B cell (primary cell): ENCODE measurements at regions of chr16 and their contacts with region 1.

Region 1: GRCh38 chr16:48609652-48610029 is 339 bp downstream of the N4BP1 start:
- DNase-seq: no peak
- ATAC-seq: peak; percentile 68
- H3K4me3 ChIP-seq: peak overlapping the region; percentile 76 to 96 (median 77)
- H3K4me3 Mint-ChIP-seq: peak overlapping the region; percentile 92
- H3K27ac ChIP-seq: peak overlapping the region in 1 of 2 donors; percentile 58
- H3K27ac Mint-ChIP-seq: peak overlapping the region; percentile 86
- H3K4me1 ChIP-seq: peaks cover 51 to 53% of the 10 kb centered on the region in 2 donors
- H3K4me1 Mint-ChIP-seq: peaks cover 38% of the 10 kb centered on the region
- H3K27me3 ChIP-seq: no peaks in the 10 kb centered on the region
- H3K27me3 Mint-ChIP-seq: no peaks in the 10 kb centered on the region
- CTCF ChIP-seq: no peak

Region 2: GRCh38 chr16:48244080-48244862 is 365.4 kb before region 1 on chr16 and contains the start of gene LONP2:
- CTCF ChIA-PET with region 1: no interaction called
- POLR2A ChIA-PET with region 1: no interaction called
- intact Hi-C with region 1: loop called (anchors 1 kb)
- DNase-seq: peak; percentile 91
- ATAC-seq: peak; percentile 96
- H3K4me3 ChIP-seq: peak within 1 kb of the TSS; percentile 60 to 87 (median 78)
- H3K4me3 Mint-ChIP-seq: peak within 1 kb of the TSS; percentile 91
- H3K27ac ChIP-seq: peak within 1 kb of the TSS; percentile 78 to 90
- H3K27ac Mint-ChIP-seq: peak within 1 kb of the TSS; percentile 79
- H3K4me1 ChIP-seq: peaks cover 16 to 22% of the 10 kb centered on the region in 2 donors
- H3K4me1 Mint-ChIP-seq: peaks cover 27% of the 10 kb centered on the region
- H3K27me3 ChIP-seq: no peaks in the 10 kb centered on the region
- H3K27me3 Mint-ChIP-seq: no peaks in the 10 kb centered on the region
- CTCF ChIP-seq: no peak
- total RNA-seq, gene LONP2: 84.2 and 87.2 TPM in 2 replicates

Region 3: DNA sequence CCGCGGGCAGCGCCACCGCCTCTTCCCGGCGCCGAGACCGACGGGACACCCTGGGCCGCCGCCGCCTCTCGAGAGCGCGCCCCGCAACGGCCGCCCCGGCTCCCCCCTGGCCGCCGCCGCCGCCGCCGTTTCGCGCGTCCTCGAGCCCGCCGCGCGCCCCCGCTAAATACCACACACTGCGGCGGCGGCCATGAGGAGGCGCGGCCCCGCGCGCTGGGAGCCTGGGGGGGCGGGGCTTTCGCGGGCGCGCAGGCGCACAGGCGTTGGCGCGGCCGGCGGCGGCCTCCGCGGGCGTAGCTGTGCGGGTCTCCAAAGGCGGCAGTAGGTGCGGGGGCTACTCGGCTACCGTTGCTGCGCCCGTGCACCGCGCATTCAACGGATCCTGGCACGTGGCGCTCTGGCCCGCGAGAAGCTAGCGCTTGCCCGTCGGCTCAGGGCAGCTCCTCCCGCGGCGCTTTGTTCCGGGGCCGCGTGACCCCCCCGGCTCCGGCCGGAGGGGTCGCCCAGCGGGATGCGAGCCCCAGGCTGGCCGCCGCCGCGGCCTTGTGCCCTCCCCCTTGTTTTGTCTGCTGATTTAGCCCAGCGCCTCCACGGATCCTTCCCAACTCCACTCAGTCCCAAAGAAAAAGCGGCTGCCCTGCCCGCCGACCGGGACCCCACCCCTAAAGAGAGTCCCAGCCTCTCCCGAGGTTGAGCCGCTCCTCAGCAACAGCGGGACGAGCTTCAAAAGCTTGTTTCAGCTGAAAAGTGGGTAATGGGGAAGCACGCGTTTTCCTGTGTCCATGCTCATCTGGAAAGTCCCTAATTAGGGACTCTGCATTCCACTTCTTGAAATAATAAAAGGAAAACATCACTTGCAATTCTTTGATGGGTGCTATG is 224.1 kb before region 1 on chr16 and contains the start of gene SIAH1:
- CTCF ChIA-PET with region 1: no interaction called
- POLR2A ChIA-PET with region 1: interaction called, 3 read pairs
- intact Hi-C with region 1: loop called (anchors 1 kb)
- DNase-seq: peak; percentile 94
- ATAC-seq: peak; percentile 81
- H3K4me3 ChIP-seq: peak within 1 kb of the TSS; percentile 66 to 95 (median 93)
- H3K4me3 Mint-ChIP-seq: peak within 1 kb of the TSS; percentile 93
- H3K27ac ChIP-seq: peak within 1 kb of the TSS; percentile 69 to 88
- H3K27ac Mint-ChIP-seq: peak within 1 kb of the TSS; percentile 92
- H3K4me1 ChIP-seq: peaks cover 17 to 23% of the 10 kb centered on the region in 2 donors
- H3K4me1 Mint-ChIP-seq: peaks cover 25% of the 10 kb centered on the region
- H3K27me3 ChIP-seq: no peaks in the 10 kb centered on the region
- H3K27me3 Mint-ChIP-seq: no peaks in the 10 kb centered on the region
- CTCF ChIP-seq: no peak
- total RNA-seq, gene SIAH1: 47.6 and 54.7 TPM in 2 replicates

Region 4: DNA sequence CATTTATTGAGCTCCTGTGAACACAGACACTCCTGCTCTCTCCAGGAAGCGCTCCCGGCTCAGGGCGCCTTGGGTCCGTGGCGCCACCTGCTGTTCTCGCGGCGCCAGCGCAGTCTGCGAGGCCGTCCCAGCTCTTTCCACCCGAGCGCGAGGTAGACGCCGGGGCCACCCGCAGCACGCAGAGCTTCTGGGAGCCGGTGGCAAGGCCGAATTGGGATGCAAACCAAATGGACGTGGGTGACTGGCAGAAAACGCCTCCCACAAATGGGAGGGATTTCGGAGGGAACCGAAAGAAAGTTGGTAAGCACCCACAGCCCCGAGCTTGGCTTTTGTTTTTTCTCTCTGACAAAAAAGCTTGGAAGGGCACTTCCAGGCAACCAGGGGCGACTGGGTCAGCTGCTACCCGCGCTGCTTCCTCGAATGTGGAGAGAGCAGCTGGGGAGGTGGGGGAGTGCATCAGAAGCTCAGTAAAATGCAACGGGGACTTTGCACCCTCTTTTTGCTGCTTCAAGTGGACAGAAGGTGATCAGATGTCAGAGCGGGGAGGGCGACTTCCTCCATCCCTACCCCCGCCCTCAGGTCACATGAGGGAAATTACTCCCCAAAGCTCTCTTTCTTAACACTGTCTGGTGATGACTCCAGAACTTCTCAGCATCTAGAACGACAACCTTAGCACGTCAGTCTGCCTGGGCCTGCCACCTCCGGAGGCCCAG is 13.8 kb after region 1 on chr16:
- CTCF ChIA-PET with region 1: interaction called, 54 read pairs
- POLR2A ChIA-PET with region 1: interaction called, 6 read pairs
- intact Hi-C with region 1: loop called (anchors 1 kb)
- DNase-seq: peak; percentile 83
- ATAC-seq: peak; percentile 98
- H3K4me3 ChIP-seq: peak overlapping the region; percentile 39 to 62 (median 59)
- H3K4me3 Mint-ChIP-seq: peak overlapping the region; percentile 85
- H3K27ac ChIP-seq: no peak overlapping the region
- H3K27ac Mint-ChIP-seq: no peak overlapping the region
- H3K4me1 ChIP-seq: peaks cover 14 to 28% of the 10 kb centered on the region in 2 donors
- H3K4me1 Mint-ChIP-seq: peaks cover 22% of the 10 kb centered on the region
- H3K27me3 ChIP-seq: peaks cover 0 to 3% (median 0%) of the 10 kb centered on the region in 4 experiments
- H3K27me3 Mint-ChIP-seq: peaks cover 4% of the 10 kb centered on the region
- CTCF ChIP-seq: peak; percentile 100